Spleen (tissue), 13 donors: ENCODE measurements at regions of chr15 and their contacts with region 1.

Region 1: DNA sequence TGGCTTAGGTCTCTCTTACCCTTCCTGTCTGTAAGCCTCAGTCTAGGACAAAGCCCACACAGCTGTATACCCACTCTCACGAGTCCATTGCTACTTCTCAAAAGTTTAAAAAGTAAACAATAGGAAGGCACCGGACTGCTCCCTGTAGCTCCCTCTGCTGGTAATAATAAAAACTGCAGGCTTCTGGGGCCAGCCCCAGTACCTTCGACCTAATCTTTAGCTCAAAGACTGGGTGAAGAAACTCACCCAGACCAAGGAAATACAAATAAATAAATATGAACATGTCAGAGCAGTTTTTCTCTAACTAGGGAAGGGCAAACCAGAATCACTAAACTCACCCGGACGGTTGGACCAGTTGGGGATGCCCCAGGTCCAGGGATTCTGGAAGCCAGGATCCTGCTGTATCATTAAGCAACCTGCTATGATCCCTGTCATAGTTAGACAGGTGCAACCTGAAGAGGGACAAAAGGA is 5.0 kb downstream of the FAM219B start:
- DNase-seq: peak; percentile 80
- H3K4me3 ChIP-seq: no peak overlapping the region
- H3K27ac ChIP-seq: peak overlapping the region in 6 of 8 donors; percentile 18 to 70 (median 54)
- H3K4me1 ChIP-seq: peaks cover 22 to 93% (median 79%) of the 10 kb centered on the region in 6 donors
- H3K27me3 ChIP-seq: no peaks in the 10 kb centered on the region
- CTCF ChIP-seq: peak; percentile 76 to 97 (median 92)
- POLR2A ChIP-seq: no peak

Region 2: DNA sequence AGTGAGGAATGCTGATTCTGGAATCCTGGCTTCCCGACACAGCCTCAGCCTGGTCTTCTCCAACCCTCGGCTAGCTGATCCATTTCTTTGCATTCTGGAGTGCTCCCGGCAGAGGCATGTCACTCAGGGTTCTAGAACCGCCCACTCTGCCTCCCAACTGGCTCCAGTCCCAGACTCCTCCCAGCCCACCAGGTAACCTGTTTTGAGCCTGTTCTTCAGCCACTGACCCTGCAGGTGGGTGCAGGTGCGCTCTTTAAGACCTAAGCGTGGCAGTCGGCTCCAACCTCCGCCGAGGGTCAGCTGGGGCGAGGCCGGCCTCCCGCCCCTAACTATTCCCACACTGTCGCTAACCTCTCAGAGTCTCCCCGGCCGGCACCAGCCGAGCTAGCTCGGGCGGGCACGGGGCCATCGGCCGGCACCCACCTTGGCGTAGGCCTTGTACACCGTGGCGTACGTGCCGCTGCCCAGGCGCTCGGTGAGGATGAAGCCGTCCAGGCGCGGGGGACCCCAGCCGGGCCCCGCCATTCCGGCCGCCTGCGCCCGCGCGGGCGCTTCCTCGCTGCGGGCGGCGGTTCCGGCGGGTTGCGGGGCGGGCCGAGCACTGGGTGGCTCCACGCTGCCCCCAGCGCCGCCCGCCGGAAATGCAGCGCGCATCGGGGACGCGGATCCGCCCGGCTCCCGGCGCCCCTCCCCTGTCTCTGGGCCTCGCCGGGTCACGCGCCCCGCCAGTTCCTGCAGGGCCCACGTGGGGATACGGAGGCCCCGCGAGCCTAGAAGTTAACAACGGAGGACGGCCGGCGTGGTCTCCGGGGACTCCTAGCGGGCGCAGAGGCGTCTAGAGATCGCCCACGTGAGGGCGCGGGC is 58.8 kb before region 1 on chr15 and contains the start of gene ULK3:
- intact Hi-C with region 1: loop called (anchors 5 kb)
- DNase-seq: peak; percentile 99
- H3K4me3 ChIP-seq: peak within 1 kb of the TSS; percentile 71 to 95 (median 89)
- H3K27ac ChIP-seq: peak within 1 kb of the TSS; percentile 76 to 92 (median 88)
- H3K4me1 ChIP-seq: peaks cover 16 to 61% (median 47%) of the 10 kb centered on the region in 6 donors
- H3K27me3 ChIP-seq: no peaks in the 10 kb centered on the region
- CTCF ChIP-seq: peak; percentile 54 to 94 (median 81)
- POLR2A ChIP-seq: peak in 1 of 3 donors; percentile 44
- total RNA-seq, gene ULK3: 51.7 to 74.6 (median 57.7) TPM